ENCODE measurements at regions of chr4 and their contacts with region 1.

Region 1: DNA sequence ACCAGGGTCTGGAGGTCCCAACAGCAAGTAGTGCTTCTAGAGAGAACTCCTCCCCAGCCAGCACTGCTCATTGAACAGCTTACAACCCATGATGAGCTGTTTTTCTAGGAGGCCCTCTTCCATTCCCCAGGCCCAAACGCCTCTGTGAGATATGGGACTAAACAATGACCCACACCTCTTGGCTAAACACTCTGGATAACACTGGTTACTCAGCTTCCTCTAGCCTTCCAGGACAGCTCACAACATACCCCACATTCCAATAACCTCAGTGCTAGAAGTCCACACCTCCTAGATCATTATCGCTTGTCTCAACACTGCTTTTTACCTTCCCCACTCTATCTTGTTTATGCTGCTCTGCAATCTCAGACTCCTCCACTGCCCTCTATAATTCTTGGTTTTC is 35.4 kb upstream of the PGRMC2 start:
- DNase-seq: peak; percentile 91
- H3K4me3 ChIP-seq: no peak overlapping the region
- H3K27ac ChIP-seq: peak overlapping the region; percentile 96
- H3K4me1 ChIP-seq: peaks cover 31% of the 10 kb centered on the region
- H3K27me3 ChIP-seq: no peaks in the 10 kb centered on the region
- CTCF ChIP-seq: no peak
- POLR2A ChIP-seq: peak; percentile 74

Region 2: DNA sequence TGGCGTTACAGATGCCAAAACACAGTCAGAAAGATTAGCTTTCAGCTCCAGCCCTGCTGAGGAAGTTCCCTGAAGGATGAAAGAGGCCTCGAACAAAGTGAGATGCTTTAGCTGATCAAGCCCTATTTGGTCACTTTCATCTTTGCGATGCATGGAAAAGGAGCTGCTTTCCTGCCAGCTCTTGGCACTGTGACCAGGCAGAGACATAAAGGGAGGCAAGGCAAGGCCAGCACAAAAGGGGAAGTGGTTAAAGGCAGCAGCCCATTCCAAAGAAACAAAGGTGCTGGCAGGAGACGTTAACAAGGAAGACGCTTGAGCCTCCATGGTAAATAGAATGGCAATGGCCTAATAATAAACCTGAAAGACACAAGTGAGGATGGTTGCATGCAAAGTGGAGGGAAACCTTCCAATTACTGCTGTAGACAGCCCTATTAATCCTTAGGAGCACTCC is 1307.3 kb before region 1 on chr4:
- CTCF ChIA-PET with region 1: no interaction called
- POLR2A ChIA-PET with region 1: no interaction called
- dilution Hi-C with region 1: no loop called
- intact Hi-C with region 1: no loop called
- DNase-seq: no peak
- H3K4me3 ChIP-seq: no peak overlapping the region
- H3K27ac ChIP-seq: no peak overlapping the region
- H3K4me1 ChIP-seq: no peaks in the 10 kb centered on the region
- H3K27me3 ChIP-seq: no peaks in the 10 kb centered on the region
- CTCF ChIP-seq: no peak
- POLR2A ChIP-seq: no peak

Region 3: DNA sequence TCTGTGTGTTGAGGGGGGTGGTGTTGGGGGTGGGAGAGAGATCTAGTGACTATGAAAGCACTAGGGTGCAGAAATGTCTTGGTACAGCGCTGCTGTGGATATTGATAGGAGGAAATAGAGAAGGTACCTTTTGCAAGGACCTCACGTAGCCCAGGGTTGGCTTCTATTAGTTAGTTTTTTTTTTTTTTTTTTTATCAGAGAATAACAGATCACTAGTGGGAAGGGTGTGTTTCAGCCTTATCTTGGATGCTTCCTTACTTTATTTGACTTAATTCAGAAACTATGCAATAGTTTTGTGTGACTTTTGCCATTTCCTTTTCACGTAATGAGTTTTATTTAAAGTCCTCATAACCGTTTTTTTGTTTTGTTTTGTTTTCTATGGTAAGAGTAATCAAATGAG is 19.0 kb before region 1 on chr4:
- CTCF ChIA-PET with region 1: interaction called, 3 read pairs
- POLR2A ChIA-PET with region 1: no interaction called
- dilution Hi-C with region 1: no loop called
- intact Hi-C with region 1: loop called (anchors 2 kb)
- DNase-seq: peak; percentile 49
- H3K4me3 ChIP-seq: no peak overlapping the region
- H3K27ac ChIP-seq: peak overlapping the region; percentile 7
- H3K4me1 ChIP-seq: peaks cover 9% of the 10 kb centered on the region
- H3K27me3 ChIP-seq: no peaks in the 10 kb centered on the region
- CTCF ChIP-seq: no peak
- POLR2A ChIP-seq: no peak

Region 4: DNA sequence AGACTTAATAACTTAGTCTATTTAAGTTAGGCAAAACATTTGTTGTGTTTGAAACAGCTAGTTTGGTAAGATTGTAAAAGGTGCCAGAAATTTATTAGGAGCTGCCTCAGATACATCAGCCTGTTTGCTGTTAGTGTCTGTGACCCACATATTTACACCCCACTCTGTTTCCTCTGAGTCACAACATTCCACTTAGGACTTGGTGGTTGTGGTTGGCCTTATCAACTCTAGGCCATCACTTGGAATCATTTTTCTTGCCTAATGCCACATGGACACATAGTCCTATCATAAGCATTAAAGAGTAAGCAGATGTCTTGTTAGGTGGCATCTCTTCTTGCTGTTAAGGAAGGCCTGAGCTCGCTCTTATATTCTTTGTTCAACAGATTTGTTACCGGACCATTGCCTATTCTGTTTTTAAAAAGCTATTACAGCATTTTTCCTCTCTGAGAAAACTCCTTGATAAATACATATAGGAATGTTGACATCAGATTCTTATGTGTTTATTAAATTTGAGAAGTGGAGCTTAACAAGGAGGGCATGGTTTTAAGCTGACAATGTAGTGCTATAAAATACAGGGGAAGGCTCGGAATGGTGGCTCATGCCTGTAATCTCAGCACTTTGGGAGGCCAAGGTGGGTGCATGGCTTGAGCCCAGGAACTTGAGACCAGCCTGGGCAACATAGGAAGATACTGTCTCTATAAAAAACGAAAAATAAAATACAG is 15.8 kb after region 1 on chr4:
- CTCF ChIA-PET with region 1: interaction called, 18 read pairs
- POLR2A ChIA-PET with region 1: no interaction called
- dilution Hi-C with region 1: no loop called
- intact Hi-C with region 1: loop called (anchors 1 kb)
- DNase-seq: peak; percentile 73
- H3K4me3 ChIP-seq: no peak overlapping the region
- H3K27ac ChIP-seq: peak overlapping the region; percentile 81
- H3K4me1 ChIP-seq: peaks cover 20% of the 10 kb centered on the region
- H3K27me3 ChIP-seq: no peaks in the 10 kb centered on the region
- CTCF ChIP-seq: no peak
- POLR2A ChIP-seq: no peak

Region 5: DNA sequence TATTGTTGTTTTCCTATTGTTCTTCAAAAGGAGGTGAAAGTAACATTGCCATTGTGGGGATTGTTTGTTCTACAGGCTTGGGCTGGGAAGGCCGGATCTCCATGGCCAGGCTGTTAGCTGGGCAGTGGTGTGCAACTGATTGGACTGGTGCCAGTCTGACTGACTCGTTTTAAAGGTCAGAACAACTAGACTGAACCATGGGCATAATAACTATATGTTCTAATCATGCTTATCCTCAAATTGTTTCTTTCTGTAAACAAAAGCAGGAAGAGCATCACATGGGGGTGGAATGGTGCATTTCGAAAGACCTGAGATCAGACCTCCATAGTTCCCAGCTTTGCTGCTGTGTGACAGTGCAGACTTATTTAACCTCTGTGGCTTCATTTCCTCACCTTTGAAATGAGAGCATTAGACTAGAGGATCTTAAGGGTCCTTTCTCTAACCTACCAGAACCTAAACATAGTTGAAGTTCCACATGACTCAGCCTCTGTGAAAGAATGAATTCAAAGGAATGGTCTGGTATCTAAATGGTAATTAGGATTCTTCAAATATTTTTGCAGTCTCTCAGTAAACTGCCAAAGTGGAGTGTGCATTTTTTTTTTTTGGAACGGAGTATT is 31.3 kb after region 1 on chr4:
- CTCF ChIA-PET with region 1: interaction called, 7 read pairs
- POLR2A ChIA-PET with region 1: no interaction called
- dilution Hi-C with region 1: no loop called
- intact Hi-C with region 1: loop called (anchors 2 kb)
- DNase-seq: peak; percentile 92
- H3K4me3 ChIP-seq: no peak overlapping the region
- H3K27ac ChIP-seq: peak overlapping the region; percentile 86
- H3K4me1 ChIP-seq: peaks cover 34% of the 10 kb centered on the region
- H3K27me3 ChIP-seq: no peaks in the 10 kb centered on the region
- CTCF ChIP-seq: no peak
- POLR2A ChIP-seq: no peak

Measured in endothelial cell of umbilical vein (primary cell).